HCT116 (cell line): ENCODE measurements at regions of chr3 and their contacts with region 1.

Region 1: GRCh38 chr3:51371943-51372557 is 13.0 kb upstream of the MANF start:
- DNase-seq: peak; percentile 51
- ATAC-seq: peak; percentile 87
- H3K4me3 ChIP-seq: no peak overlapping the region
- H3K27ac ChIP-seq: no peak overlapping the region
- H3K4me1 ChIP-seq: no peaks in the 10 kb centered on the region
- H3K27me3 ChIP-seq: no peaks in the 10 kb centered on the region
- CTCF ChIP-seq: peak; percentile 70 to 88 (median 78)
- POLR2A ChIP-seq: no peak
- RAD21 ChIP-seq: peak; percentile 92

Region 2: DNA sequence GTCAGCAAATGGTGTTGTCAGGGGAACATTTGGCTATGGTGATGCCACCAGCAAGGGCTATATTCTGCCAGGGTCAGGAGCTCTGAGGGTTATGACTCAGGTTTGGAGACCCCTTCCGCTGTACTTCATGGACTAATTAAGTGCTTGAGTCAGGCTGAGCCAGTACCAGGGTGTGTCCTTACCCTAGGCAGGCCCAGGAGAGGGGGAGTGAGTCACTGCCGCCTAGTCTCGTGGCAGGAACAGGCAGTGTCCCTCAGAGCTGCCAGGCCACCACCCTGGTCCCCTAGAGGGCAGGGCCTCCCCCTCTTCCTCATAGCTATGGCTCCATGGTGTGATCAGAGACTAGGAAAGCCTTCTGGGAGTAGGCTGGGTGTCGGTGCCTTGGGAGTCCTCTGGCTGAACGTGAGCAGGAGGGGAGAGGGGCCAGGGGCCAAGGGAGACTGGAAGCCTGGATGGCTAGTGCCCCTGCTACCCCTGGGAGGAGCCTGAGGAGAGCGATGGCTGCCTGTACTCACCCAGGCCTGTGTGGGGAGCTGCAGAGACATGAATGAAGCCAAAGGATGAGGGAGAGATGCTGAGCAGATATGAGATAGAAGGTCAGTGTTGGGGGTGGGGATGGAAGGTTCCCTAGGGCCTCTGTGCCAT is 744.5 kb before region 1 on chr3:
- CTCF ChIA-PET with region 1: interaction called, 11 read pairs
- POLR2A ChIA-PET with region 1: no interaction called
- RAD21 ChIA-PET with region 1: interaction called in 1 of 2 experiments, 3 read pairs
- intact Hi-C with region 1: no loop called
- DNase-seq: peak; percentile 88
- ATAC-seq: peak; percentile 91
- H3K4me3 ChIP-seq: peak overlapping the region; percentile 27 to 41
- H3K27ac ChIP-seq: peak overlapping the region; percentile 87
- H3K4me1 ChIP-seq: peaks cover 65 to 98% of the 10 kb centered on the region in 2 experiments
- H3K27me3 ChIP-seq: no peaks in the 10 kb centered on the region
- CTCF ChIP-seq: peak in 2 of 3 experiments; percentile 60 to 65; a peak in 4 of 6 replicates
- POLR2A ChIP-seq: no peak
- RAD21 ChIP-seq: no peak

Region 3: DNA sequence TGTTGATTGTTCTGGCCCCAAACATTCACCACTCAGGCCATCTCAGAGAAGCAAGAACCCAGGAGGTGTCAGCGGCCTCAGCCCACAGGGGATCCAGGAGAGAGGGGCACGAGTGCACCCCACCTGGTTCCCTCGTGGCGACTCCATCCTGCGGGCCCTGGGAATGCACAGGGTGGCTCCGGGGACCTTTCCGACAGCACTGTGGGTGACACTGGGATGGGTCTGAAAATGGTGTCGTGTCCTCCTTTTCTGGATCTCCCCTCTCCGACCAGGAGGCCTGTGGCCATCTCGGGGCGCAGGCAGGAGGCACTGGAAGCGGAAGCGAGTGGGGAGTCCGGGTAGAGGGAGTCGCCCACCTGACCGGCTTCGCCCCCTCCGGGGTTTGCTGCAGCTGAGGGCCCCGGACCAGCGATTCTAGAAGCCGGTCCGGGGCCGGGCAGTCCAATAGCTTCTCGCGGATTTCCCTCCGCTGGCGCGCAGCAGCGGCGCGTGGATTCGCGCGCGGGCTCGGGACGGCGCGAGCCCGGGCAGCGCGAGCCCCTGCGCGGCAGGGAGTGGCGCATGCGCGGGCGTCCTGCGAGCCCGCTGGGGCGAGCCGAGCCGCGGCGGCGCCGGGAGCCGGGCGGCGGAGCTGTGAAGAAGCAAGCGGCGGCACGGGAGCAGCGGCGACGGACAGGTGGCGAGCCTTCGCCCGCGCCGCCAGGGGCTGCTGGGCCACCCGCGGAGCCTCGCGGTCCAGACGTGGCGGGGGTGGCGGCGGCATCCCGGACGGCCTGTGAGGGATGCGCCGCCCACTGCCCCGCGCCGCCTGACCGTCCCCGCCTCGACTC is 697.5 kb before region 1 on chr3 and contains the start of gene DOCK3:
- CTCF ChIA-PET with region 1: interaction called, 4 read pairs
- POLR2A ChIA-PET with region 1: no interaction called
- RAD21 ChIA-PET with region 1: no interaction called
- intact Hi-C with region 1: loop called (anchors 5 kb)
- DNase-seq: no peak
- ATAC-seq: peak; percentile 83
- H3K4me3 ChIP-seq: peak within 1 kb of the TSS; percentile 56 to 61
- H3K27ac ChIP-seq: peak within 1 kb of the TSS; percentile 70; the same call in 1 of the 2 replicates
- H3K4me1 ChIP-seq: peaks cover 24 to 34% of the 10 kb centered on the region in 2 experiments
- H3K27me3 ChIP-seq: no peaks in the 10 kb centered on the region
- CTCF ChIP-seq: no peak
- POLR2A ChIP-seq: peak; percentile 44
- RAD21 ChIP-seq: no peak
- total RNA-seq, gene DOCK3: 4.2 TPM

Region 4: GRCh38 chr3:50971487-50971924 is 400.5 kb before region 1 on chr3:
- CTCF ChIA-PET with region 1: interaction called, 13 read pairs
- POLR2A ChIA-PET with region 1: no interaction called
- RAD21 ChIA-PET with region 1: no interaction called
- intact Hi-C with region 1: loop called (anchors 2 kb)
- DNase-seq: peak; percentile 73
- ATAC-seq: peak; percentile 96
- H3K4me3 ChIP-seq: no peak overlapping the region
- H3K27ac ChIP-seq: no peak overlapping the region
- H3K4me1 ChIP-seq: peaks cover 0 to 3% of the 10 kb centered on the region in 2 experiments; a peak in 1 of 4 replicates
- H3K27me3 ChIP-seq: no peaks in the 10 kb centered on the region
- CTCF ChIP-seq: peak; percentile 88 to 99 (median 96)
- POLR2A ChIP-seq: no peak
- RAD21 ChIP-seq: peak; percentile 94

Region 5: DNA sequence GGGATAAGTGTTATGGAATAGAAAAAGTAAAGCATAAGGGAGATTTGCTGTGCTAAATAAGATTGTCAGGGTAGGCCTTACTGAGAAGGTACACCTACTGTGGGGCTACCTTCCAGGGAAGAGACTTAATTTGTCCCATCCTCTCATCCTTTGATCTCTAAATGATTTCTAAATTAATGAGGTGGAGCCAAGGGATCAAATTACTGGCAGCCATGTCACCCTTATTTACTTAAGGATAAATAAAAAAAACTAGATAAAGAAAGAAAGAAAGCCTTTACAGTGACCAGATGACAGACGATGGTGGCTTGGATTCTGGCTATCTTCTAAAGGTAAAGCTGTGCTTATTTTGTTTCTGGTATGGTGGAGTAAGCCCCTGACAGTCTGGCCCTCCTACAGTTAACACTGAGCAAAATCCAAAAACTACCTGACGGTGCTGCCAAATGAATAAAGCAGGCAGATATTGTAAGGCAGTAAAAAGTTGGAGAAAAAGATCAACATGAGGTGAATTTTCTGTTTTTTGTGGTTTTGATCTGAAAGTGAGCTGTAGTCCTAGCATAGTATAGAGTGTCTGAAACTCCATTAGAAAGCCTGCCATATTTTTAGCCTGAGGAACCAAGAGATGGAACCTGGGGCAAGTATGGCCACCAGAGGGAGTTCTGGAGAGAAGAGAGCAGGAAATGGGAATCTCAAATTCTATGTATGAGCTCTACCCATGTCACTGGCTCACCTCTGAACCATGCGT is 272.1 kb before region 1 on chr3:
- CTCF ChIA-PET with region 1: interaction called, 46 read pairs
- POLR2A ChIA-PET with region 1: no interaction called
- RAD21 ChIA-PET with region 1: interaction called, 6 to 7 read pairs
- intact Hi-C with region 1: loop called (anchors 1 kb)
- DNase-seq: peak; percentile 41
- ATAC-seq: peak; percentile 98
- H3K4me3 ChIP-seq: no peak overlapping the region
- H3K27ac ChIP-seq: no peak overlapping the region
- H3K4me1 ChIP-seq: no peaks in the 10 kb centered on the region
- H3K27me3 ChIP-seq: no peaks in the 10 kb centered on the region
- CTCF ChIP-seq: peak; percentile 74 to 90 (median 84)
- POLR2A ChIP-seq: no peak
- RAD21 ChIP-seq: peak; percentile 66

Region 6: GRCh38 chr3:51271172-51271571 is 100.9 kb before region 1 on chr3:
- CTCF ChIA-PET with region 1: interaction called, 9 read pairs
- POLR2A ChIA-PET with region 1: no interaction called
- RAD21 ChIA-PET with region 1: no interaction called
- intact Hi-C with region 1: loop called (anchors 5 kb)
- DNase-seq: no peak
- ATAC-seq: no peak
- H3K4me3 ChIP-seq: no peak overlapping the region
- H3K27ac ChIP-seq: no peak overlapping the region
- H3K4me1 ChIP-seq: no peaks in the 10 kb centered on the region
- H3K27me3 ChIP-seq: no peaks in the 10 kb centered on the region
- CTCF ChIP-seq: no peak
- POLR2A ChIP-seq: no peak
- RAD21 ChIP-seq: no peak

Region 7: GRCh38 chr3:51384726-51385473 is 12.8 kb after region 1 on chr3 and contains the start of gene MANF:
- CTCF ChIA-PET with region 1: interaction called, 10 read pairs
- POLR2A ChIA-PET with region 1: no interaction called
- RAD21 ChIA-PET with region 1: no interaction called
- intact Hi-C with region 1: no loop called
- DNase-seq: peak; percentile 95
- ATAC-seq: peak; percentile 93
- H3K4me3 ChIP-seq: peak within 1 kb of the TSS; percentile 97 to 99
- H3K27ac ChIP-seq: peak within 1 kb of the TSS; percentile 86
- H3K4me1 ChIP-seq: peaks cover 15 to 39% of the 10 kb centered on the region in 2 experiments; a peak in 3 of 4 replicates
- H3K27me3 ChIP-seq: no peaks in the 10 kb centered on the region
- CTCF ChIP-seq: no peak
- POLR2A ChIP-seq: peak; percentile 39
- RAD21 ChIP-seq: no peak
- total RNA-seq, gene MANF: 132 TPM

Region 8: GRCh38 chr3:51471775-51472652 is 100.0 kb after region 1 on chr3:
- CTCF ChIA-PET with region 1: no interaction called
- POLR2A ChIA-PET with region 1: no interaction called
- RAD21 ChIA-PET with region 1: no interaction called
- intact Hi-C with region 1: no loop called
- DNase-seq: no peak
- ATAC-seq: no peak
- H3K4me3 ChIP-seq: no peak overlapping the region
- H3K27ac ChIP-seq: no peak overlapping the region
- H3K4me1 ChIP-seq: no peaks in the 10 kb centered on the region
- H3K27me3 ChIP-seq: no peaks in the 10 kb centered on the region
- CTCF ChIP-seq: no peak
- POLR2A ChIP-seq: no peak
- RAD21 ChIP-seq: no peak